ENCODE measurements at regions of chr13 and their contacts with region 1.

Region 1: GRCh38 chr13:72643311-72643989 is 84.0 kb downstream of the MZT1 start:
- DNase-seq: peak; percentile 37
- CTCF ChIP-seq: peak; percentile 63

Region 2: DNA sequence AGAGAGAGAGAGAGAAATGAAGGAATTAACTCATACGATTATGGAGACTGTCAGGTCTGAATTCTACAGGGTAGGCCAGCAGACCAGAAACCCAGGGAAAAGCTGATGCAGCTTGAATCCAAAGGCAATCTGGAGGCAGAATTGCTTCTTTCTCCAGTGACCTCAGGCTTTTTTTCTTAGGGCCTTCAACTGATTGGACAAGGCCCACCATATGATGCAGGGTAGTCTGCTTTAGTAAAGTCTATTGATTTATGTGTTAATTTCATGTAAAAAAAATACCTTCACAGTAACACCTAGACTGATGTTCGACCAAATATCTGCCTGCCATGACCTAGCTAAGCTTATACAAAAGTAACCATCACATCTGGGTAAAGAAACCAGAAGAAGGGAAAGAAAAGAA is 12.9 kb after region 1 on chr13:
- CTCF ChIA-PET with region 1: interaction called, 12 read pairs
- POLR2A ChIA-PET with region 1: no interaction called
- DNase-seq: no peak
- CTCF ChIP-seq: no peak

Region 3: GRCh38 chr13:72696579-72696978 is 53.1 kb after region 1 on chr13:
- CTCF ChIA-PET with region 1: interaction called, 18 read pairs
- POLR2A ChIA-PET with region 1: no interaction called
- DNase-seq: no peak
- CTCF ChIP-seq: no peak

Measured in GM10248 (cell line).